A673 (cell line): ENCODE measurements at regions of chr1 and their contacts with region 1.

Region 1: GRCh38 chr1:111720977-111721786 is 18.0 kb downstream of the INKA2 start:
- DNase-seq: no peak
- H3K4me3 ChIP-seq: no peak overlapping the region
- H3K27ac ChIP-seq: no peak overlapping the region
- H3K4me1 ChIP-seq: peaks cover 8% of the 10 kb centered on the region
- H3K27me3 ChIP-seq: no peaks in the 10 kb centered on the region
- CTCF ChIP-seq: no peak

Region 2: DNA sequence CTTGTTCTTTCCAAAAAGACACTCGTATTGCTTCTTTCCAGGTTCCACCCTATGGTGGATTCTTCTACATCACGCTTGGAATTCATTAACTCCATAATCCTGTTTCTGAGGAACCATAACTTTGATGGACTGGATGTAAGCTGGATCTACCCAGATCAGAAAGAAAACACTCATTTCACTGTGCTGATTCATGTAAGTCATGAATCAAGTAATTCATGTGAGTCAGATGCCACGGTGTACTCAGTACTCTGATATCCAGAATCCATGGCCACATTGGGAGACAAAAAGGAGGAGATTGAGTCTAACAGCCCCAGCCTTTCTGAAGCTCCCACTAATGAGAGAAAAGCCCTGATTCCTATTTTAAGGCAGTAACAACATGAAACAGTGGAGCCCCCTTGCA is 486.3 kb before region 1 on chr1:
- CTCF ChIA-PET with region 1: no interaction called
- POLR2A ChIA-PET with region 1: no interaction called
- intact Hi-C with region 1: no loop called
- DNase-seq: no peak
- H3K4me3 ChIP-seq: no peak overlapping the region
- H3K27ac ChIP-seq: no peak overlapping the region
- H3K4me1 ChIP-seq: no peaks in the 10 kb centered on the region
- H3K27me3 ChIP-seq: peaks cover 53% of the 10 kb centered on the region
- CTCF ChIP-seq: no peak

Region 3: DNA sequence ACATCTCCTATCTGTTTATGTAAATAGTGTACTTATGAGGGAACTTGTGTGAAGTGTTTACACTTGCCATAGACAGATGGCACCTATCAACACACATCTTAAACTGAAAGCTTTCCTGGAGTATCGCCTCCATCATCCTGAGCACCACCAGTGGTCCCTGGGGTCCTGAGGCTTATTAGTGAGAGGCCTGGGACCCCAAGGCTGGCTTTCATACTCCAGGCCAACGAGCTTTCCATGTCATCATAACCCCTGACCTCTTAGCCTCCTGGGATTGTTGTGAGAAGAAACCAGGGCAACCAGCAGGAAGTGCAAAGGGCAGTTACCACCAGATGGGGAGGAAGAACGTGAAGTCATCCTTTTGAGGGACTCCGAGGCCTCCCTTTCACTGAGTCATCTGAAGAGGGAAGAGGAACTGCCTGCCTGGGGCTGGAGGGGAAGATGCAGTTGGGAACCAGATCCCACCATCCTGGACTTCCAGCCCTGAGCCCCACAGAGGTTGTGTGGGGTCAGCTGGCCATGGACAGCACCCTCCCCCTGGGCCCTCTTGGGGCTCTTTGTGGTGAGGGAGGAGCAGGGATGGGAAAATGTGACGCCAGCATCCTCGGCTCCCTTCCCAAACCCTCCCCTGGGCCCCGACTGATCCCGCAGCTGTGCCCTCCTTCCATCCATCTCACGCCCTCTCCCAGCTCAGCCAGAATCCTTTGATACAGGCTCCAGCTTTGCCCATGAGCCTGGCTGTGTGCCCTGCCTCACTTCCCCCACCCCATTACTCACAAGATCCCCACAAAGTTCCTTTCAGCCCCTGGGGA is 12.2 kb after region 1 on chr1:
- CTCF ChIA-PET with region 1: no interaction called
- POLR2A ChIA-PET with region 1: no interaction called
- intact Hi-C with region 1: loop called (anchors 1 kb)
- DNase-seq: no peak
- H3K4me3 ChIP-seq: no peak overlapping the region
- H3K27ac ChIP-seq: peak overlapping the region; percentile 8
- H3K4me1 ChIP-seq: peaks cover 46% of the 10 kb centered on the region
- H3K27me3 ChIP-seq: no peaks in the 10 kb centered on the region
- CTCF ChIP-seq: no peak